Panc1 (cell line): ENCODE measurements at regions of chr2 and their contacts with region 1.

Region 1: DNA sequence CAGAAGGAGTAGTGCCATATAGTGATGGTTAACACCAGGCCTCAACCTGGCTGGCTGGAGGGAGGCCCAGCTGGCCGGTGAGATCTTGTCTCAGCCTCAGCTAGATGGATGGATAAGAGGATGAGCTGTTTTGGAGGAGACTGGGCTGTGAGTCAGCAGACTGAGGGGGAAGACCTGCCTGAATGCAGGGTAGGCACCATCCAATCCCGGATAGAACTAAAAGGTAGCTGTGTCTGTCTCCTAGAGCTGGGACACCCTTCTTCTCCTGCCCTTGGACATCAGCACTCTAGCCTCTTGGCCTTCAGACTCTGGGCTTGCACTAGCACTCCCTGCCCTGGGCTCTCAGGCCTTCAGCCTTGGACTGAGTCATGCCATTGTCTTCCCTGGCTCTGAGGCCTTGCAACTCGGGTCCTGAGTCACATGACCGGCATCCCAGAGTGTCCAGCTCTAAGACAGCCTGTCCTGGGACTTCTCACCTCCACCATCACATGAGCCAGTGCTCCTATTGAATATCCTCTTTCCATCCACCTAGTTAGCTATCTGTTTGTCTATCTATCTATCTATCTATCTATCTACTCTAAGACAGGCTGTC is 131.3 kb downstream of the TPO start:
- DNase-seq: no peak
- ATAC-seq: no peak
- H3K4me3 ChIP-seq: no peak overlapping the region
- H3K27ac ChIP-seq: no peak overlapping the region
- H3K4me1 ChIP-seq: peaks cover 16% of the 10 kb centered on the region
- H3K27me3 ChIP-seq: no peaks in the 10 kb centered on the region
- CTCF ChIP-seq: no peak

Region 2: GRCh38 chr2:854460-854859 is 690.1 kb before region 1 on chr2:
- CTCF ChIA-PET with region 1: no interaction called
- POLR2A ChIA-PET with region 1: no interaction called
- in situ Hi-C with region 1: no loop called
- intact Hi-C with region 1: loop called (anchors 5 kb)
- DNase-seq: peak; percentile 7
- ATAC-seq: no peak
- H3K4me3 ChIP-seq: no peak overlapping the region
- H3K27ac ChIP-seq: no peak overlapping the region
- H3K4me1 ChIP-seq: no peaks in the 10 kb centered on the region
- H3K27me3 ChIP-seq: no peaks in the 10 kb centered on the region
- CTCF ChIP-seq: peak; percentile 83

Region 3: DNA sequence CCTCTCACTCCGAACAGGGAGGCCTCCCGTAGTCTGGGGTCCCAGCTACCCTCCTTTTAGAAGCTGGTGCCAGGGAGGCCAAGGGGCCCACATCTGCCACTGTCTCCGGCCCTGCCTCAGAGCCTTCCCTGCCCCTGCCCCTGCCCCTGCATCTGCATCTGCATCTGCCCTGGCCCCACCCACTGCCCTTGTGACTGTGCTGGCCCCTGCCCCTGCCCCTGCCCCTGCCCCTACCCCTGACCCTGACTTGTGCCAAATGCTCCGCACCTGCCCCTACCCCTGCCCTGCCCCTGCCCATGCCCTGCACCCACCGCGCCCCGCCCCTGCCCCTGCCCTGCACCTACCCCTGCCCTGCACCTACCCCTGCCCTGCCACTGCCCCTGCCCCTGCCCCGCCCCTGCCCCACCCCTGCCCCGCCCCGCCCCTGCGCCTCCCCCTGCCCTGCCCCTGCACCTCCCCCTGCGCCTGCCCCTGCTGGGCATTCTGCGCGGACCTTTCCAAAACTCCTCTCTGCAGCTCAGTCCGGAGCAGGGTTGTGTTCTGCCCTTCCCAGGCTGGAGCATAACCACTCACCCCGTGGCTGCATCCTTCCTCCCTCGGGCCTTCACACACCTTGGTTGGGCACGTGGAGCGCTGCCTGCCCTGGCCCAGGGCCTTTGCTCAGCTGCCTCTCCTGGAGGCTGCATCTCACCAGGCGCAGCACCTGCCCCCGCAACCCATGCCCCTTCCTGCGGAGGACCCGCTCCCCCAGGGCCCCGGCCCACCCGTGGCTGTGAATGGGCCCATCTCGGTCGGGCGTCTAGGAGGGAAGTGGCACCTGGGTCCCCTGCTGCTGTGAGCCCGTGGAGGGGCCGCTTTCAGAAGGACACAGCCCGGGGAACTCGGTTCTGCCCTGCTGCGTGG is 588.5 kb before region 1 on chr2:
- CTCF ChIA-PET with region 1: no interaction called
- POLR2A ChIA-PET with region 1: no interaction called
- in situ Hi-C with region 1: no loop called
- intact Hi-C with region 1: loop called (anchors 2 kb)
- DNase-seq: no peak
- ATAC-seq: no peak
- H3K4me3 ChIP-seq: no peak overlapping the region
- H3K27ac ChIP-seq: no peak overlapping the region
- H3K4me1 ChIP-seq: no peaks in the 10 kb centered on the region
- H3K27me3 ChIP-seq: no peaks in the 10 kb centered on the region; the same call in 1 of the 2 replicates
- CTCF ChIP-seq: no peak

Region 4: DNA sequence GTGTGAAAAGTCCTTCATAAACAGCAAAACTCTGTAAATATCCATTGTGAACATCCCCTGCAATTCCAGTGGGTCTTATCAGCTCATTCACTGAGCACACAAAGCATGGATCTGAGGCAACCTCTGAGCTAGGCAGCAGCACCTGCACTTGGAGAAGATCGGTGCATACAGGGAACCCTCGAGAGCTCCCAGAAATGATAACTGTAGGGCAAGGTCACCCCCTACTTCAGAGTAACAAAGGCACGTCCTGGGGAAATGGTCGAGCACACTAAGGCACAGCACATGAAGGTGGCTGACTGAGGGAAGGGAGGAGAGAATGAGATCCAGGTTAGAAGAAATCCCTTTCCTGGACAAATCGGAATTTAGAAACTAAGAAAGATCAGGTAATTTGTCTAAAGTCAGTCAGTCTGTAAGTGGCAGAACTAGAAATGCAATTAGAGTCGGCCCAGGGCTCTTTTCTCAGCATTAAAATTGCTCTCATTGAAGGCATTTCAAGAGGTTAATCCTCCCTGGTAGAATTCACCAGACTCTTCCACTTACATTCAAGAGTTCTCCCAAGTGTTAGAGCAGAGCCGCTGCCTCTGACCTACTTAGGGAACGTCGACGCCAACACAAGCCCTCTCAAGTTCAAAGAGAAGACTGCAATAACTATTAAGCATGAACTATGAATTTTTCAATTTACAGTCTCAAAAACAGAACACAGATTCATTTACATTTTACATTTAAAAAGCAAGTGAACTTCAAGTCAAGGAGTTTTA is 153.8 kb after region 1 on chr2:
- CTCF ChIA-PET with region 1: no interaction called
- POLR2A ChIA-PET with region 1: no interaction called
- in situ Hi-C with region 1: no loop called
- intact Hi-C with region 1: no loop called
- DNase-seq: no peak
- ATAC-seq: 0 out of 2 replicates have a peak, but pooled peaks have one; percentile 13
- H3K4me3 ChIP-seq: no peak overlapping the region
- H3K27ac ChIP-seq: peak overlapping the region; percentile 76; the same call in 1 of the 2 replicates
- H3K4me1 ChIP-seq: no peaks in the 10 kb centered on the region; the same call in 1 of the 2 replicates
- H3K27me3 ChIP-seq: no peaks in the 10 kb centered on the region
- CTCF ChIP-seq: no peak